ENCODE measurements at regions of chr18 and their contacts with region 1.

Region 1: DNA sequence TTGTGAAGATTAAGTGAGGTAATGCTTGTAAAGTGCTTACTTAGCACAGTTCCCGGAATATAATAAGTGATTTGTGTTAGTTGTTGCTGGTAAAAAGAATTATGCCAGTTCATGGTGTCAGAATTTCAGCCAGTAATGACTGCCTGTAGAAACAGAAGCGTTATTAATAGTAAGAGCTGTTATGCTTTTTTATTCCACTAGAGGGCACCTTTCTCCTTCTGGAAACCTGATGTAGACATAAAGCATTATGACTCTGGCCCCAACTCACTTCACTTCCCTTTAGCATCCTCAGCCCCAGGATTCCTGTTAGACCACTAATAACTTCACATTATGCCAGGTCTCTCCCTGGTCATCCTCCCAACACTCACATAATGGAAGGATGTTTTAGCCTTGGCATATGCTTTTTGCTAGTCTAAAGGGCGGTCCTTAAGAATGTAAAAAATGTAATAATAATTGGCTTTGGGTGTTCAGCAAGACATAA is 34.9 kb downstream of the C18orf54 start:
- DNase-seq: peak in 2 of 9 experiments; percentile 58 to 69
- ATAC-seq: peak; percentile 56
- H3K4me3 ChIP-seq: no peak overlapping the region
- H3K4me3 Mint-ChIP-seq: no peak overlapping the region
- H3K27ac ChIP-seq: no peak overlapping the region
- H3K27ac Mint-ChIP-seq: no peak overlapping the region
- H3K4me1 ChIP-seq: no peaks in the 10 kb centered on the region
- H3K4me1 Mint-ChIP-seq: peaks cover 4% of the 10 kb centered on the region
- H3K27me3 ChIP-seq: no peaks in the 10 kb centered on the region
- H3K27me3 Mint-ChIP-seq: peaks cover 11% of the 10 kb centered on the region
- CTCF ChIP-seq: peak; percentile 91

Region 2: GRCh38 chr18:53657270-53657669 is 735.3 kb before region 1 on chr18:
- CTCF ChIA-PET with region 1: no interaction called
- POLR2A ChIA-PET with region 1: no interaction called
- intact Hi-C with region 1: no loop called
- DNase-seq: no peak
- ATAC-seq: no peak
- H3K4me3 ChIP-seq: no peak overlapping the region
- H3K4me3 Mint-ChIP-seq: no peak overlapping the region
- H3K27ac ChIP-seq: no peak overlapping the region
- H3K27ac Mint-ChIP-seq: no peak overlapping the region
- H3K4me1 ChIP-seq: no peaks in the 10 kb centered on the region
- H3K4me1 Mint-ChIP-seq: no peaks in the 10 kb centered on the region
- H3K27me3 ChIP-seq: no peaks in the 10 kb centered on the region
- H3K27me3 Mint-ChIP-seq: no peaks in the 10 kb centered on the region
- CTCF ChIP-seq: no peak

Region 3: GRCh38 chr18:54357660-54358494 is 34.7 kb before region 1 on chr18 and contains the starts of genes C18orf54 and STARD6:
- CTCF ChIA-PET with region 1: interaction called, 4 read pairs
- POLR2A ChIA-PET with region 1: interaction called, 3 read pairs
- intact Hi-C with region 1: loop called in 1 of 2 experiments (anchors 1 kb)
- DNase-seq: peak; percentile 76 to 97 (median 88)
- ATAC-seq: peak; percentile 93
- H3K4me3 ChIP-seq: peak within 1 kb of the TSS; percentile 67 to 79
- H3K4me3 Mint-ChIP-seq: peak within 1 kb of the TSS; percentile 100
- H3K27ac ChIP-seq: peak within 1 kb of the TSS; percentile 57 to 75
- H3K27ac Mint-ChIP-seq: peak within 1 kb of the TSS; percentile 94
- H3K4me1 ChIP-seq: peaks cover 11% of the 10 kb centered on the region
- H3K4me1 Mint-ChIP-seq: peaks cover 18% of the 10 kb centered on the region
- H3K27me3 ChIP-seq: peaks cover 0 to 2% of the 10 kb centered on the region in 2 experiments
- H3K27me3 Mint-ChIP-seq: no peaks in the 10 kb centered on the region
- CTCF ChIP-seq: peak; percentile 63
- total RNA-seq, gene C18orf54: 0.33 to 0.42 TPM
- total RNA-seq, gene STARD6: not detected

Region 4: DNA sequence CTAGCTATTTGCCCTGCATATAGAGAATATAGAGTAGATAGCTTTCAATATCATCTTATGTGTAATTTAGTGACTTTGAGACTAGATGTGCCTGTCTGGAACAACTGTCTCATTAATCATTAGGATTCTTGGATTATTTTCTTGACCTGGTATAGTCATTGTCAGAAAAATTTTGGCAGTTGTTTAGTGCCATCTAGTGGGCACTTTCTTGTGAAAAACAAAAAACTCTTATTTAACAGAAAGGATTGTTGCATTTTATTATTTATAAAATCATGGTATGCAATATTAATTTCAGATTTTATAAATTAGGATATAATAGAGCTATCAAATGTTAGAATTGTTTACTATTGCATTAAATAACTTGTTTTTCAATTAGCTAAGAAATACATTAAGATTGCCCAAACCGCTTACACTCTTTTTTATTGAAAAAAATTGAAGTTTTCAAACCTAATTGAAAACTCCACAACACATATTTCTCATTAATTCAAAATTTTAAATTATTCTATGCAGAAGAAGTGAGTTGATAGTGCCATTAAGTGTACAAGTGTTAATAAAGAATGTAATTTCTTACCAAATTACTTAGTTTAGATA is 278.8 kb after region 1 on chr18:
- CTCF ChIA-PET with region 1: interaction called, 4 read pairs
- POLR2A ChIA-PET with region 1: no interaction called
- intact Hi-C with region 1: loop called (anchors 2 to 5 kb)
- DNase-seq: peak in 2 of 9 experiments; percentile 17 to 41
- ATAC-seq: no peak
- H3K4me3 ChIP-seq: no peak overlapping the region
- H3K4me3 Mint-ChIP-seq: no peak overlapping the region
- H3K27ac ChIP-seq: no peak overlapping the region
- H3K27ac Mint-ChIP-seq: no peak overlapping the region
- H3K4me1 ChIP-seq: no peaks in the 10 kb centered on the region
- H3K4me1 Mint-ChIP-seq: no peaks in the 10 kb centered on the region
- H3K27me3 ChIP-seq: no peaks in the 10 kb centered on the region
- H3K27me3 Mint-ChIP-seq: no peaks in the 10 kb centered on the region
- CTCF ChIP-seq: peak; percentile 71

Region 5: DNA sequence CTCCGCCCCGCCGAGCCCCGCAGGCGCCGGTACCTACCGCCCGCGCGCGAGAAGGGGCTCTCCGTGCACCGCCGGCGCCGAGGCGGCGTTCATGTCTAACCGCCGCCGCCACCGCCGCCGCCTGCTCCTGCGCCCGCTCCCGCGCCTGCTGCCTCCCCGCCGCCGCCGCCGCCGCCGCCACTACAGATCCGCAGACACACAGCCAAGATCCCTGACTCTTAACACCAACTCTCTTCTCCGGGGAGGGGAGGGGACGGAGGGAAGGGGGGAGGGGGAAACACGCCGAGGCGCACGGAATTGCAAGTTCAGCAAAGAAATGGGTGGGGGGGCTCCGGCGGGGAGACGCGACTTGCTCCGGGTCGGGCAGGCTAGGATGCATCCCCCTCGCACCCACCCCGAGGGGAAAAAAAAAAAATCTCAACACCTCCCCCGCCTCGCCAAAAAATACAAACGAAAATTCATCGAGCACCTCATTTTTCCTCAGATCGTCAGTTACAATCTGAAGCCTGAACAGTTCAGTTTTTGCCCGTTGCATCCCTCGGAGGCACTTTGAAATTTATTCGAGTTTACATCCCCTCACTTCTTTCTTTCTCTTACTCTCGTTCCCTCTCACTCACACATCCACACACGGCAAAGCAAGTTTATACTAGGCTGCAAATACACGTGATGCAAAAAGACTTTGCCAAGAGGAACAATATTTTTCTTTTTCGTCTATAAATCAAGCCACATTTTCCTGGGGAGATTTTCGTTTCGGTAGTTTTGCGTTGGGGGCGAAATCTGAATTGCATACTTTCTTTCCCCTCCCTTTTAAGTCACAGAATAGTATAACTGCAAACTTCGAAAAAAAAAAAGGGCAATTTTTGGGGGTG is 1195.7 kb after region 1 on chr18 and contains the start of gene TCF4:
- CTCF ChIA-PET with region 1: no interaction called
- POLR2A ChIA-PET with region 1: no interaction called
- intact Hi-C with region 1: no loop called
- DNase-seq: peak in 4 of 9 experiments; percentile 21 to 63 (median 46)
- ATAC-seq: peak; percentile 26
- H3K4me3 ChIP-seq: peak within 1 kb of the TSS; percentile 48 to 54
- H3K4me3 Mint-ChIP-seq: peak within 1 kb of the TSS; percentile 90
- H3K27ac ChIP-seq: peak within 1 kb of the TSS in 1 of 2 experiments; percentile 37
- H3K27ac Mint-ChIP-seq: peak within 1 kb of the TSS; percentile 75
- H3K4me1 ChIP-seq: peaks cover 7% of the 10 kb centered on the region
- H3K4me1 Mint-ChIP-seq: peaks cover 26% of the 10 kb centered on the region
- H3K27me3 ChIP-seq: peaks cover 5 to 7% of the 10 kb centered on the region in 2 experiments
- H3K27me3 Mint-ChIP-seq: peaks cover 45% of the 10 kb centered on the region
- CTCF ChIP-seq: no peak
- total RNA-seq, gene TCF4: 2.4 TPM